ENCODE measurements at regions of chr14 and their contacts with region 1.

Region 1: GRCh38 chr14:64303471-64303917 is 9.3 kb upstream of the ESR2 start:
- DNase-seq: peak; percentile 74
- ATAC-seq: peak; percentile 95
- H3K4me3 ChIP-seq: no peak overlapping the region
- H3K27ac ChIP-seq: no peak overlapping the region
- H3K4me1 ChIP-seq: no peaks in the 10 kb centered on the region
- H3K27me3 ChIP-seq: no peaks in the 10 kb centered on the region
- CTCF ChIP-seq: peak; percentile 71 to 91 (median 86)
- POLR2A ChIP-seq: no peak
- RAD21 ChIP-seq: peak; percentile 92

Region 2: DNA sequence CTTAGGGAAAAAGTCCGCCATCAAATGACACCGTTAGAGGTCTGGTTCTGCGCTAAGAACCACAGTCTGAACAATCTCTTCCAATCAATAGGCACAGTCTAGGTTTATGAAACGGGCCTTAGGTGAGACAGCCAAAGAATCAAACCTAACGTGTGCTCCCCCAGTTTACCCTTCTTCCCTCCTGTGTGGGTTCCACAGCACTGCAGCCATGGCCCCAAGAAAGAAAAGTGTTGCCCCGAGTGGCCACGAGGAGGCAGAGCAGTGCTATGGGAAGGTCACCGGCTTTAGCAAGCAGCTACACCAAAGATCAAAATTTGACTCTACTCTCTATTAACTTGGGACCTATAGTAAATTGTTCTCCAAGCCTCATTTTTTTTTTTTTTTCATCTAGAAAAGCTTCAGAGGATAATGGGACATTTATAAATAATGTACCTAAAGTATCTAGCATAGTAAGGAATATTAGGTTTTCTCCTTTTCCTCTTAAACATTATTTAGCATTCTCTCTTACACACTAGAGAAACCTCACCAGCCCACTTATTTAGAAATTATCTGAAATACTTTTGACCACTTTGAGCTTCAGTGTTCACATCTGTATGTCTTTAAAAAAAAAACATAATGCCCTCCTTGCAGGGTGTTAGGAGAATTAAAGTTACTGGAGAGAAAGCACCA is 914.6 kb before region 1 on chr14:
- CTCF ChIA-PET with region 1: interaction called, 3 read pairs
- POLR2A ChIA-PET with region 1: no interaction called
- RAD21 ChIA-PET with region 1: no interaction called
- intact Hi-C with region 1: loop called (anchors 2 kb)
- DNase-seq: peak; percentile 21
- ATAC-seq: peak; percentile 97
- H3K4me3 ChIP-seq: no peak overlapping the region
- H3K27ac ChIP-seq: no peak overlapping the region
- H3K4me1 ChIP-seq: no peaks in the 10 kb centered on the region
- H3K27me3 ChIP-seq: no peaks in the 10 kb centered on the region
- CTCF ChIP-seq: peak; percentile 64 to 90 (median 86); a peak in 5 of 6 replicates
- POLR2A ChIP-seq: no peak
- RAD21 ChIP-seq: peak; percentile 86

Region 3: DNA sequence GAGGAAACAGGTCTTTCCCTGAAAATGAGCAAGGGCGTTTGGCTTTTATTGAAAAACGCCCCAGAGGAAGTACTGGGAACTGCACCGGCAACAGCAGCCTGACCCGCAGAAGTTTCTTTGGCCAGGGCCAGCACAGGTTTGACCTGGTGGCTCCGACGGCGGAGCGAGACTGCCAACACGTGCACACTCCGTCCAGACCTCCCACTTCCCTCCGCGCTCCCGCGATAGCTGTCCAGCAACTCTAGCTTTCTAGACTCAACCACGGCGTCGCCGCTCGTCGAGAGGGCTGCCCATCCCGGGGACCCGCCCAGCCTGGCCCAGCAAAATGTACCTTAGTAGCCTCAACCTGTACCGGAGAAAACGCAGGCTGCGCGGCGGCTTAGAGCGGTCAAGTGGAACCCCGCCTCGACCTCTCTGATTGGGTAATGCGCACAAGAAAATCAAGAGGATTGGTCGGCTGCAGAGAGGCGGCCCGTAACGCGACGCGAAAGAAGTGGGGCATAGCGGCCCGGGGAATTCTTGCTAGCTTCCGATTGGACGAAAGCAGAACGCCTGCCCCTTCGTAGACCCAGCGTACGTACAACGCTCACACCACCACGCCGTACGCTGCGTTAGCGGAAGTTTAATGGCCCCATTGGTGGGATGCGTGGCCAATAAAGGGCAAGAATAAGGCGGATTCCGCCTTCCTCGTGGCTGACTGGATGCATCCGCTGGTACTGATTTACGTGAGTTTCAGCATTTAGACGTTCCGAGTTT is 661.8 kb before region 1 on chr14 and contains the start of gene WDR89:
- CTCF ChIA-PET with region 1: no interaction called
- POLR2A ChIA-PET with region 1: no interaction called
- RAD21 ChIA-PET with region 1: no interaction called
- intact Hi-C with region 1: loop called (anchors 10 kb)
- DNase-seq: peak; percentile 98
- ATAC-seq: peak; percentile 91
- H3K4me3 ChIP-seq: peak within 1 kb of the TSS; percentile 75 to 86
- H3K27ac ChIP-seq: peak within 1 kb of the TSS; percentile 92
- H3K4me1 ChIP-seq: peaks cover 0 to 17% of the 10 kb centered on the region in 2 experiments; a peak in 2 of 4 replicates
- H3K27me3 ChIP-seq: no peaks in the 10 kb centered on the region
- CTCF ChIP-seq: peak; percentile 17 to 80 (median 76); a peak in 4 of 6 replicates
- POLR2A ChIP-seq: no peak
- RAD21 ChIP-seq: peak; percentile 44
- total RNA-seq, gene WDR89: 22.8 TPM

Region 4: DNA sequence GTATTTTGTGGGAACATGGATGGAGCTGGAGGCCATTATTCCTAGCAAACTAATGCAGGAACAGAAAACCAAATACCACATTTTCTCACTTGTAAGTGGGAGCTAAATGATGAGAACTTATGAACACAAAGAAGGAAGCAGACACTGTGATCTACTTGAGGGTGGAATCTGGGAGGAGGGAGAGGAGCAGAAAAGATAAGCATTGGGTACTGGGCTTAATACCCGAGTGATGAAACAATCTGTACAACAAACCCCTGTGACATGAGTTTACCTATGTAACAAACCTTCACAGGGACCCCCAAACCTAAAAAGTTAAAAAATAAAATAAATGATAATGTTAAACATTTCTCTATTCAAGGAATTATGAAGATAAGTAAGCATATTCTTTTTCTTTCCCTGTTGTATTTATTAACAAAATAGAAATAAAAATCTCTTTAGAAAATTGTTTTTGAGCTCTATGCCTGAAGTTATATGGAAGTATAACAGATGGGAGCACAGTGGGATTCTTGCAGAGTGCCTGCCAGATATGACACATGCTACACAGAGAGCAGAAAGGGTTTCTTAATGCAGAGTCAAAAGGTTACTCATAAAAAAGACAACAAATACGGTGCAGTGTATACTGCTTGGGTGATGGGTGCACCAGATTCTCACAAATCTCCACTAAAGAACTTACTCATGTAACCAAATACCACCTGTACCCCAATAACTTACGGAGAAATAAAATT is 502.7 kb before region 1 on chr14:
- CTCF ChIA-PET with region 1: interaction called, 15 read pairs
- POLR2A ChIA-PET with region 1: no interaction called
- RAD21 ChIA-PET with region 1: interaction called in 1 of 2 experiments, 3 read pairs
- intact Hi-C with region 1: no loop called
- DNase-seq: no peak
- ATAC-seq: no peak
- H3K4me3 ChIP-seq: no peak overlapping the region
- H3K27ac ChIP-seq: no peak overlapping the region
- H3K4me1 ChIP-seq: peaks cover 0 to 6% of the 10 kb centered on the region in 2 experiments; a peak in 2 of 4 replicates
- H3K27me3 ChIP-seq: no peaks in the 10 kb centered on the region
- CTCF ChIP-seq: no peak
- POLR2A ChIP-seq: no peak
- RAD21 ChIP-seq: no peak

Region 5: DNA sequence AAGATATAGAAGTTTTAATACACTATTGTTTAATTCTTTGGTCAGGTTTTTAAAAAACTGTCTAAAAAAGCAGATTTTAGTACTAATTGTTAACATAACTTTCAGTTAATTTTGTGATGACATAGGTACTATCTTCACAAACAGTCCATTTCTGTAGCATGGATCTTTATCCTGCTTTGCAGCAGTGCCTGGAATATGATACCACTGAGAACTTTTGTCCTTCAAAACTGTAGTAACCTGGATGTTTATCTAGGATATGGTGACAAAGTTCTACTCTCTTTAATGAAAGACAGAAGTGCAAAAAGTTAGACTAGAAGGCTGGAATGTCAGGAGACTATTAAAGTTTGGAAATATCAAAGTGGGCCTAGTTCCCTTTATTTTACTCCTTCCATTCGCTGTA is 290.8 kb before region 1 on chr14:
- CTCF ChIA-PET with region 1: interaction called, 29 read pairs
- POLR2A ChIA-PET with region 1: no interaction called
- RAD21 ChIA-PET with region 1: interaction called in 1 of 2 experiments, 5 read pairs
- intact Hi-C with region 1: loop called (anchors 1 kb)
- DNase-seq: no peak
- ATAC-seq: no peak
- H3K4me3 ChIP-seq: no peak overlapping the region
- H3K27ac ChIP-seq: no peak overlapping the region
- H3K4me1 ChIP-seq: no peaks in the 10 kb centered on the region
- H3K27me3 ChIP-seq: no peaks in the 10 kb centered on the region
- CTCF ChIP-seq: no peak
- POLR2A ChIP-seq: no peak
- RAD21 ChIP-seq: no peak

Measured in HCT116 (cell line).